Astrocyte of the cerebellum (primary cell): ENCODE measurements at regions of chr19 and their contacts with region 1.

Region 1: GRCh38 chr19:8526345-8527067 is 12.5 kb upstream of the ZNF414 start:
- DNase-seq: peak; percentile 82
- H3K4me3 ChIP-seq: peak overlapping the region; percentile 80
- CTCF ChIP-seq: no peak

Region 2: DNA sequence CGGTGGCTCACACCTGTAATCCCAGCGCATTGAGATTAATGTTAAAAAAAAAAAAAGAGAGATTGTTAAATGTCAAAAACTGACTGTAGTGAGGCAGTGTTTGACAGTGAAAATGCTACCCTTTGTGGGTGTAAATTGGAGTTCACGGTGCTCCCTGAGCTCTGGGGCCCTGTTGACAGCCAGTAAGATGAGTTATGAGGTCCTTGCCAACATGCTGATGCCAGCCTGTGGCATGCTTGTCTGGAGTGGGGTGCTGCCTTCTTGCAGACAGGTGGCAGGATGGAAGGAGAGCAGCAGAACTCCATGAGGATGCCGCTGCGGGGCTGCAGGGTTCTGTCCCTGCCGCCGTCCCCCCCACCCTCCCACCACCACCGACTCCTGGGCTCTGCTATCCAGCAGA is 50.0 kb before region 1 on chr19:
- in situ Hi-C with region 1: loop called (anchors 5 kb)
- DNase-seq: no peak
- H3K4me3 ChIP-seq: no peak overlapping the region
- CTCF ChIP-seq: no peak

Region 3: GRCh38 chr19:8592231-8593009 is 65.9 kb after region 1 on chr19:
- in situ Hi-C with region 1: loop called (anchors 5 kb)
- DNase-seq: peak; percentile 94
- H3K4me3 ChIP-seq: peak overlapping the region; percentile 42
- CTCF ChIP-seq: no peak

Region 4: GRCh38 chr19:8663920-8664670 is 137.6 kb after region 1 on chr19:
- in situ Hi-C with region 1: no loop called
- DNase-seq: no peak
- H3K4me3 ChIP-seq: no peak overlapping the region
- CTCF ChIP-seq: no peak